ENCODE measurements at regions of chr6 and their contacts with region 1.

Region 1: DNA sequence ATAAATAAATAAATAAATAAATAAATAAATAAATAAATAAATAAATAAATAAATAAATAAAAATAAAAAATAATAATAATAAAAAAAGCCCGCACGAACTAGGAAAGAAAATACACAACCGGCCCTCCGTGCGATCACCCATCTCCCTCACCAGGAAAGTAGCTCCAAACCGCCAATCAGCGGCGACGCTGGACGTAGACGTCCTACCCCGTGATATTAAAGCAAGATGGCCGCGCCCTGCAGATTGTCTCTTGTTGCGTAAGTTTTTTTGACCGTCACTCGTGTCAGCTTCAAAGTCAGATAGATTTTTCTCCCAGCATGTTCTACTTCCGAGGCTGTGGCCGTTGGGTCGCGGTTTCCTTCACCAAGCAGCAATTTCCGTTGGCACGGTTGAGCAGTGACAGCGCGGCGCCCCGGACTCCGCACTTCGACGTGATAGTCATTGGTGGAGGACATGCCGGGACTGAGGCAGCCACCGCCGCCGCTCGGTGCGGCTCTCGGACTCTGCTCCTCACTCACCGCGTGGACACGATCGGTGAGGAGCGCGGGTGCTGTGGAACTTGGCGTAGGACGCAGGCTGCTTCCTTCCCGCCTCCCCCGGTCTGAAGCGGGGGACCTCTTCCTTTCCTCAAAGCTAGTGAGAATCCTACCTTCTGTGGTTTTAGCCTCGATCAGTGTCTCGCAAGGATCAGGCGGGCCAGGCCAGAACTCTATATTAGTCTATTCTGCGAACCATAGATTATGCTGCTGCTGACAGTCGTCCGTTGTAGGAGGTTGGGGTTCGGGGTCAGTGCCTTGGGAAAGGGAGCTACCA is at the start of gene MTO1:
- DNase-seq: peak; percentile 64 to 95 (median 84)
- ATAC-seq: peak; percentile 93
- H3K4me3 ChIP-seq: peak within 1 kb of the TSS; percentile 97 to 98
- H3K4me3 Mint-ChIP-seq: peak within 1 kb of the TSS; percentile 97
- H3K27ac ChIP-seq: peak within 1 kb of the TSS; percentile 93 to 97
- H3K27ac Mint-ChIP-seq: peak within 1 kb of the TSS; percentile 98
- H3K4me1 ChIP-seq: peaks cover 8% of the 10 kb centered on the region
- H3K4me1 Mint-ChIP-seq: peaks cover 40% of the 10 kb centered on the region
- H3K27me3 ChIP-seq: no peaks in the 10 kb centered on the region
- H3K27me3 Mint-ChIP-seq: no peaks in the 10 kb centered on the region
- CTCF ChIP-seq: no peak
- total RNA-seq, gene MTO1: 35.7 to 37.0 TPM

Region 2: GRCh38 chr6:73299151-73299971 is 162.4 kb before region 1 on chr6:
- CTCF ChIA-PET with region 1: no interaction called
- POLR2A ChIA-PET with region 1: no interaction called
- intact Hi-C with region 1: no loop called
- DNase-seq: no peak
- ATAC-seq: no peak
- H3K4me3 ChIP-seq: no peak overlapping the region
- H3K4me3 Mint-ChIP-seq: no peak overlapping the region
- H3K27ac ChIP-seq: no peak overlapping the region
- H3K27ac Mint-ChIP-seq: no peak overlapping the region
- H3K4me1 ChIP-seq: no peaks in the 10 kb centered on the region
- H3K4me1 Mint-ChIP-seq: no peaks in the 10 kb centered on the region
- H3K27me3 ChIP-seq: no peaks in the 10 kb centered on the region
- H3K27me3 Mint-ChIP-seq: peaks cover 3% of the 10 kb centered on the region
- CTCF ChIP-seq: no peak

Region 3: GRCh38 chr6:73418081-73418741 is 43.5 kb before region 1 on chr6:
- CTCF ChIA-PET with region 1: no interaction called
- POLR2A ChIA-PET with region 1: interaction called, 3 read pairs
- intact Hi-C with region 1: loop called in 1 of 2 experiments (anchors 5 kb)
- DNase-seq: peak in 1 of 9 experiments; percentile 14
- ATAC-seq: no peak
- H3K4me3 ChIP-seq: no peak overlapping the region
- H3K4me3 Mint-ChIP-seq: no peak overlapping the region
- H3K27ac ChIP-seq: no peak overlapping the region
- H3K27ac Mint-ChIP-seq: peak overlapping the region; percentile 69
- H3K4me1 ChIP-seq: peaks cover 17% of the 10 kb centered on the region
- H3K4me1 Mint-ChIP-seq: peaks cover 20% of the 10 kb centered on the region
- H3K27me3 ChIP-seq: no peaks in the 10 kb centered on the region
- H3K27me3 Mint-ChIP-seq: no peaks in the 10 kb centered on the region
- CTCF ChIP-seq: no peak

Region 4: GRCh38 chr6:73484438-73484837 is 22.7 kb after region 1 on chr6:
- CTCF ChIA-PET with region 1: interaction called, 3 read pairs
- POLR2A ChIA-PET with region 1: interaction called, 10 read pairs
- intact Hi-C with region 1: no loop called
- DNase-seq: no peak
- ATAC-seq: no peak
- H3K4me3 ChIP-seq: no peak overlapping the region
- H3K4me3 Mint-ChIP-seq: no peak overlapping the region
- H3K27ac ChIP-seq: no peak overlapping the region
- H3K27ac Mint-ChIP-seq: peak overlapping the region; percentile 57
- H3K4me1 ChIP-seq: no peaks in the 10 kb centered on the region
- H3K4me1 Mint-ChIP-seq: peaks cover 3% of the 10 kb centered on the region
- H3K27me3 ChIP-seq: no peaks in the 10 kb centered on the region
- H3K27me3 Mint-ChIP-seq: no peaks in the 10 kb centered on the region
- CTCF ChIP-seq: no peak

Region 5: DNA sequence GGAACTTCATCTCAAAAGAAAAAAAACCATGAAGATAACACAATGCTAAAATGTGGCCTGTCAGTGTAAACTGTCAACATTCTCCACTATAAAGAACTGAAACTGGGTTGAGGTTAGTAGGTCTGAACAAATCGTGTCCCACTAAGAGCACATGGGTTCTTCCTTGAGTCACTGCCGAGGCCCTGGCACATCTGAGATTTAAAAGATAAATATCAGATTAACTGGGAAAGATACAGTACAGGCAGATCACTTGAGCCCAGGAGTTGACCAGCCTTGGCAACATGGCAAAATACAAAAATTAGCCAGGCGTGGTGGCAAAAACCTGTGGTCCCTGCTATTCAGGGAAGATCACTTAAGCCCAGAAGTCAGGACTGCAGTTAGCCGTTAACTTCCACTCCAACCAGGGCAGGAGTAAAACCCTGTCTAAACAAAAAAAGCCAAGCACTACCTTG is 53.5 kb after region 1 on chr6:
- CTCF ChIA-PET with region 1: interaction called, 7 read pairs
- POLR2A ChIA-PET with region 1: interaction called, 66 read pairs
- intact Hi-C with region 1: loop called in 1 of 2 experiments (anchors 2 kb)
- DNase-seq: peak in 3 of 9 experiments; percentile 12 to 48 (median 32)
- ATAC-seq: no peak
- H3K4me3 ChIP-seq: no peak overlapping the region
- H3K4me3 Mint-ChIP-seq: peak overlapping the region; percentile 37
- H3K27ac ChIP-seq: peak overlapping the region in 1 of 2 experiments; percentile 55
- H3K27ac Mint-ChIP-seq: peak overlapping the region; percentile 68
- H3K4me1 ChIP-seq: peaks cover 35% of the 10 kb centered on the region
- H3K4me1 Mint-ChIP-seq: peaks cover 50% of the 10 kb centered on the region
- H3K27me3 ChIP-seq: no peaks in the 10 kb centered on the region
- H3K27me3 Mint-ChIP-seq: no peaks in the 10 kb centered on the region
- CTCF ChIP-seq: no peak

Region 6: GRCh38 chr6:73653571-73654424 is 192.1 kb after region 1 on chr6 and contains the start of gene SLC17A5:
- CTCF ChIA-PET with region 1: interaction called, 6 read pairs
- POLR2A ChIA-PET with region 1: interaction called, 9 read pairs
- intact Hi-C with region 1: loop called (anchors 2 kb)
- DNase-seq: peak; percentile 81 to 94 (median 88)
- ATAC-seq: peak; percentile 85
- H3K4me3 ChIP-seq: peak within 1 kb of the TSS; percentile 78 to 94
- H3K4me3 Mint-ChIP-seq: peak within 1 kb of the TSS; percentile 99
- H3K27ac ChIP-seq: peak within 1 kb of the TSS; percentile 92 to 95
- H3K27ac Mint-ChIP-seq: peak within 1 kb of the TSS; percentile 97
- H3K4me1 ChIP-seq: peaks cover 20% of the 10 kb centered on the region
- H3K4me1 Mint-ChIP-seq: peaks cover 29% of the 10 kb centered on the region
- H3K27me3 ChIP-seq: no peaks in the 10 kb centered on the region
- H3K27me3 Mint-ChIP-seq: no peaks in the 10 kb centered on the region
- CTCF ChIP-seq: no peak
- total RNA-seq, gene SLC17A5: 4.9 to 5.5 TPM

Region 7: DNA sequence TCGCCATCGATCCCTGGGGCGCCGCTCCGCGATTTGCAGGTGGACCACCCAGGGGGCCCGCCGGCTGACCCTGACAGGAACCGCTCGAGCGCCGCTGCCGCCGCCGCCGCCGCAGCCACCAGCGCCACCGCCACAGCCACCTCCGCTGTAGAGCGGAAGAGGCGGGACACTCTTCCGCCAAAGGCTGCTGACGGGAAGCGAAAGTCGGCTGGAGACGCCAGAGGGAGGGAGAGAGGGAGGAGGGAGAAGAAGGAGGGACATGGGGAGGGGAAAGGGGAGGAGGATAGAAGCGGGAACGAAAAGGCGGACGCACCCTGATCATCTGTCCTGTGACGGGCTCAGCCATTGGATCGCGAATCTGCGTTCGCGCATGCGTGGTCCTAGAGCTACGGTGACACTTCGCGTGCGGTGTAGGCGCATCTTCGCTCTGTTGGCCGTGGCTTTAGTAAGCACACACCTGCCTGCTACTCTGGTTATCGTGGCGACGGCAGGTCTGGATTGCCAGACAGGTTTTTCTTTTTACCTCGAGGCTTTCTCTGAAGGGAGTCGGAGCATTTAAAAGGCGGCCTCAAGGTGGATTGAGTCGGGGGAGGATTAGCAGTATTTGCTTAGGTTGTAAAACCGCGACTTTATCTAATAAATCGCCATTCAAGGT is 1823.0 kb after region 1 on chr6 and contains the start of gene TMEM30A:
- CTCF ChIA-PET with region 1: no interaction called
- POLR2A ChIA-PET with region 1: no interaction called
- intact Hi-C with region 1: loop called in 1 of 2 experiments (anchors 2 kb)
- DNase-seq: peak; percentile 89 to 100 (median 96)
- ATAC-seq: peak; percentile 96
- H3K4me3 ChIP-seq: peak within 1 kb of the TSS; percentile 65 to 97
- H3K4me3 Mint-ChIP-seq: no peak within 1 kb of the TSS
- H3K27ac ChIP-seq: peak within 1 kb of the TSS; percentile 72 to 88
- H3K27ac Mint-ChIP-seq: no peak within 1 kb of the TSS
- H3K4me1 ChIP-seq: peaks cover 47% of the 10 kb centered on the region
- H3K4me1 Mint-ChIP-seq: peaks cover 44% of the 10 kb centered on the region
- H3K27me3 ChIP-seq: no peaks in the 10 kb centered on the region
- H3K27me3 Mint-ChIP-seq: no peaks in the 10 kb centered on the region
- CTCF ChIP-seq: no peak
- total RNA-seq, gene TMEM30A: 19.4 to 27.1 TPM